Prostate gland (tissue), 2 donors: ENCODE measurements at regions of chr5 and their contacts with region 1.

Region 1: GRCh38 chr5:15003511-15003920 is 131.9 kb upstream of the ANKH start:
- DNase-seq: peak; percentile 74
- H3K4me3 ChIP-seq: no peak overlapping the region
- H3K27ac ChIP-seq: no peak overlapping the region
- H3K4me1 ChIP-seq: peaks cover 3% of the 10 kb centered on the region
- H3K27me3 ChIP-seq: no peaks in the 10 kb centered on the region
- CTCF ChIP-seq: peak; percentile 43 to 92 (median 89)
- POLR2A ChIP-seq: no peak

Region 2: DNA sequence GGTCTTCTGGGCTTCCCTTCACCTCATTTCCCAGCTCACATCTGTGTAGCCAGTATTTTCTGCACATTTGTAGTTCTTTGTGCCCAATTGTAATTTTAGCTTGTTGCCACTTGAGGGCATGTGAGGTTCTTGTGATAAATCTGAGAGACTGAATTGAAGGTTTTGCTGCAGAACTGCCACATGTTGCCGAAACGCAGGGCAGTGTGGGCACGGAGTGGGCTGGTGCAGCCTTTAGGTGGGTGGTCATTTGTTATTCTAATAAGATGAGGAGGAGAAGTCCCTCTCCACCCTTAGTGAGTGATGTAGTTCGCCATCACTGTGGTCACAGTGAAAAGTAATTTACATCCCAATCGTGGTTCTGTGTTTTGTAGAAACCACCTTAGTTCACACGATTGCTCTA is 317.8 kb before region 1 on chr5:
- intact Hi-C with region 1: loop called (anchors 5 kb)
- DNase-seq: peak; percentile 49
- H3K4me3 ChIP-seq: no peak overlapping the region
- H3K27ac ChIP-seq: peak overlapping the region; percentile 84 to 90
- H3K4me1 ChIP-seq: peaks cover 25% of the 10 kb centered on the region
- H3K27me3 ChIP-seq: no peaks in the 10 kb centered on the region
- CTCF ChIP-seq: peak; percentile 34 to 87 (median 70)
- POLR2A ChIP-seq: no peak

Region 3: GRCh38 chr5:14925326-14925725 is 78.2 kb before region 1 on chr5:
- intact Hi-C with region 1: no loop called
- DNase-seq: no peak
- H3K4me3 ChIP-seq: no peak overlapping the region
- H3K27ac ChIP-seq: no peak overlapping the region
- H3K4me1 ChIP-seq: peaks cover 5% of the 10 kb centered on the region
- H3K27me3 ChIP-seq: no peaks in the 10 kb centered on the region
- CTCF ChIP-seq: no peak
- POLR2A ChIP-seq: no peak